ENCODE measurements at regions of chr14 and their contacts with region 1.

Region 1: GRCh38 chr14:105351920-105352851 is 37.6 kb downstream of the PACS2 start:
- DNase-seq: peak; percentile 94
- H3K4me3 Mint-ChIP-seq: no peak overlapping the region
- H3K27ac Mint-ChIP-seq: no peak overlapping the region
- H3K4me1 Mint-ChIP-seq: peaks cover 2% of the 10 kb centered on the region
- H3K27me3 Mint-ChIP-seq: no peaks in the 10 kb centered on the region

Region 2: GRCh38 chr14:105203057-105203531 is 149.1 kb before region 1 on chr14:
- CTCF ChIA-PET with region 1: interaction called, 9 read pairs
- POLR2A ChIA-PET with region 1: no interaction called
- intact Hi-C with region 1: loop called (anchors 1 kb)
- DNase-seq: peak; percentile 71
- H3K4me3 Mint-ChIP-seq: no peak overlapping the region
- H3K27ac Mint-ChIP-seq: no peak overlapping the region
- H3K4me1 Mint-ChIP-seq: peaks cover 9% of the 10 kb centered on the region
- H3K27me3 Mint-ChIP-seq: peaks cover 14% of the 10 kb centered on the region

Region 3: DNA sequence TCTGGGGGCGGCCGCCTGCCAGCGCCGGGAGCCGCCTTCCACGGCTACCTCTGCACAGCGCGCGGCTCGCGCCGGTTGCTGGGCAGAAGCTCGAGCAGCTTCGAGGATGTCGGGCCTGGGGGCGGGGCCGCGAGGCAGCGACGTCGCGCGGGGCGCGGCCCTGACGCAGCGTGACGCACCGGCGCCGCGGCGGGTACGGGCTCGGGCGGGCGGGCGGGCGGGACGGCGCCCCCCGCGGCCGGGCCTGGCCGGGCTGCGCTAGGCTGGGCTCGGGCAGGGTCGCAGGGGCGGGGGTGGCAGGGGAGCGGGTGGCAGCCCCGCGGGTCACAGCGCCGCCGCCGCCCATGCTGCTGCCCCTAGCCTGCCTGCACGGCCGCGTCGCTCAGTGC is 103.8 kb before region 1 on chr14 and contains the start of gene BTBD6:
- CTCF ChIA-PET with region 1: interaction called, 11 read pairs
- POLR2A ChIA-PET with region 1: interaction called, 3 read pairs
- intact Hi-C with region 1: no loop called
- DNase-seq: peak; percentile 92
- H3K4me3 Mint-ChIP-seq: peak within 1 kb of the TSS; percentile 74
- H3K27ac Mint-ChIP-seq: peak within 1 kb of the TSS; percentile 49
- H3K4me1 Mint-ChIP-seq: peaks cover 25% of the 10 kb centered on the region
- H3K27me3 Mint-ChIP-seq: no peaks in the 10 kb centered on the region
- total RNA-seq, gene BTBD6: 38.5 to 39.5 TPM

Region 4: GRCh38 chr14:105281371-105282097 is 70.7 kb before region 1 on chr14:
- CTCF ChIA-PET with region 1: no interaction called
- POLR2A ChIA-PET with region 1: no interaction called
- intact Hi-C with region 1: loop called (anchors 5 kb)
- DNase-seq: peak; percentile 28
- H3K4me3 Mint-ChIP-seq: no peak overlapping the region
- H3K27ac Mint-ChIP-seq: no peak overlapping the region
- H3K4me1 Mint-ChIP-seq: peaks cover 19% of the 10 kb centered on the region
- H3K27me3 Mint-ChIP-seq: no peaks in the 10 kb centered on the region

Region 5: DNA sequence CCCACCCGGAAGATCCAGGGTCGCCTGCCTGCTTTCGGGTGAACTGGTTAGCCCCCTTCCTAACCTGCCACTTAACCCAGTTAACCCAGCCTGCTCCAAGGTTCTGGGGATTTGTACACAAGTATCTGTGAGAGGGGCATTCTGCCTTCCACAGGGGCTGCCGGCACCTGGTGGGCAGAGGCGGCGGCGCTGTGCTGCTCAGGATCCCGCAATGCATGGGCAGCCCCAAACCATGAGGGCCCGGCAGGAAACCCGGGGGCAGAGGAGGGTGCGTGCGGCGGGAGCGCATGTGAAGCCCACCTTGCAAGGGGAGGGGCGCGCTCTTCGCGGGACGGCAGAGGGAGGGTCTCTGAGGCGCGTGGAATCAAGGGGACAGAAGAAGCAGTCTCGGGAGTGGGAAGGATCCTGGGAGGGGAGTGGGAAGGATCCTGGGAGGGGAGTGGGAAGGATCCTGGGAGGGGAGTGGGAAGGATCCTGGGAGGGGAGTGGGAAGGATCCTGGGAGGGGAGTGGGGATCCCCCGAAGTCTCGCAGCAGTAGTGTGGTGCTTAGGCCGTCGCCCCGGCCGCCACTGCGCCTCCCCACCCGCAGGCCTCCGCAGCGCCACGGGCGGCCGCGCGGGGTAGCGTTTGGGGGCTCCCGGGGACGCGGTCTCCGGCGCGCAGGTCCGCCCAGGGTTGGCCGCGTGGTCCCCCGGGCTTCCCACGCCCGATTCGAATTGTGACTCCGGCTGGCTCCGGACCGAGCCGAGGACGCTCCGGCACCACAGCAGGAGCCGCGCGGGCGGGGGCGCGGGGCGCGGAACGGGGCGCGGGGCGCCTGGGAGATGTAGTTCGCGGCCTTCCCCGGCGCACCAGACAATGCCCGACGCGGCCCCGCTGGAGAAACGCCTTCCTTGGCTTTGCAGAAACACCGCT is 62.5 kb after region 1 on chr14:
- CTCF ChIA-PET with region 1: no interaction called
- POLR2A ChIA-PET with region 1: no interaction called
- intact Hi-C with region 1: no loop called
- DNase-seq: peak; percentile 73
- H3K4me3 Mint-ChIP-seq: peak overlapping the region; percentile 60
- H3K27ac Mint-ChIP-seq: no peak overlapping the region
- H3K4me1 Mint-ChIP-seq: peaks cover 12% of the 10 kb centered on the region
- H3K27me3 Mint-ChIP-seq: peaks cover 16% of the 10 kb centered on the region

Region 6: GRCh38 chr14:105480952-105481801 is 129.0 kb after region 1 on chr14:
- CTCF ChIA-PET with region 1: no interaction called
- POLR2A ChIA-PET with region 1: no interaction called
- intact Hi-C with region 1: no loop called
- DNase-seq: peak; percentile 95
- H3K4me3 Mint-ChIP-seq: peak overlapping the region; percentile 71
- H3K27ac Mint-ChIP-seq: peak overlapping the region; percentile 92
- H3K4me1 Mint-ChIP-seq: peaks cover 61% of the 10 kb centered on the region
- H3K27me3 Mint-ChIP-seq: peaks cover 14% of the 10 kb centered on the region